ENCODE measurements at regions of chr2 and their contacts with region 1.

Region 1: DNA sequence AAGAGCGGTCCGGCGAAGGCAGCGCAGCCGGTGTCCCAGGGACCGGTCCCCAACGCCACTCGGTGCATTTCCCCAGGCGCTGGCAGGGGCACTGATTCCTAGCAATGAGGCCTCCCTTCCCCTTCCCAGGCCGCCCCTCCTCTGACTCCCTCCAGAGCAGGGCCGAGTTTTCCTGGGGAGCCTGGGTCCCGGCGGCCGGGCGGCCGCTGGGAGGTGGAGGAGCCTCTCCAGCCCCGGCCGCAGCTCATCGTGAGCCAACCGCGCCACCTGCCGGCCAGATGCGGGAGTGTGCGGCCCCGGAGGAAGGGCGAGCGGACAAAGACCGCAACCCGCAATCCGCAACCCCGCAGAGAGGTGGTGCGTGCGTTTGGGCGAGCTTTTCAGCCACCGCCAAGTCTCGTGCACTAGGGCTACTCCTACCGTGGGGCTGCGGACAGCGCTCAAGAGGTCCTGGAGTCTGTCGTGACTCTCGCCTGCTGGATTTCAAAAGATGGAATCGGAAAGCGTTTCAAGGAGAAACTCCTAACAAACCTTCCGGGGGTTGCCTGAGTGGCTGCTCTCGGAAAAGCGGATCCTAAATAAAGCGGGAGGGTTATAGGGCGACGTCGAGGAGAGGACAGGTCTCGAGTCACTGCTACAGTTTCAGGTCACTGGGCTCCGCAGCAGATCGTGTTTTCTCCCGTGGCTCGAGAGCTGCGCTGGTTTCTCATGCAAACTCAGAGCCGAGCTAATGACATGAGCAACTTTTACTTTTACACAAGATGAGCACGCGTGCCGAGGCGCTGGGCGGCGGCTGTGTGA is 1.5 kb upstream of the EPHA4 start:
- DNase-seq: peak; percentile 82 to 94
- H3K4me3 ChIP-seq: peak overlapping the region; percentile 79
- H3K4me1 ChIP-seq: peaks cover 21% of the 10 kb centered on the region
- H3K27me3 ChIP-seq: no peaks in the 10 kb centered on the region

Region 2: DNA sequence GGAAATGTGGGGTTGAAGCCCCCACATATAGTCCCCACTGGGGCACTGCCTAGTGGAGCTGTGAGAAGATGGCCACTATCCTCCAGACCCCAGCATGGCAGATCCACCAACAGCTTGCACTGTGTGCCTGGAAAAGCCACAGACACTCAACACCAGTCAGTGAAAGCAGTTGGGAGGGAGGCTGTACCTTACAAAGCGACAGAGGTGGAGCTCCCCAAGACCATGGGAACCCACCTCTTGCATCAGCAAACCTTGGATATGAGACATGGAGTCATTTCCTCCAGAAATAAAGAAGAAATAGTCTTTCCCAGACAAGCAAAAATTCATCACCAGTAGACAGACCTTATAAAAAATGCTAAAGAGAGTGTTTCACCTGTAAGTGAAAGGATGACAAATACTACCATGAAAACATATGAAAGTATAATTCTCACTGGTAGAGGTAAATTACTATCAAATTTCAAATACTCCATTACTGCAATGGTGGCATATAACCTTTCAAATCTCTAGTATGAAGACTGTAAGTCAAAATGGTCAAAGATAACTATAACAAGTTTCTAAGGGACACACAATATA is 151.1 kb after region 1 on chr2:
- in situ Hi-C with region 1: no loop called
- DNase-seq: no peak
- H3K4me3 ChIP-seq: no peak overlapping the region
- H3K4me1 ChIP-seq: no peaks in the 10 kb centered on the region
- H3K27me3 ChIP-seq: no peaks in the 10 kb centered on the region

Region 3: DNA sequence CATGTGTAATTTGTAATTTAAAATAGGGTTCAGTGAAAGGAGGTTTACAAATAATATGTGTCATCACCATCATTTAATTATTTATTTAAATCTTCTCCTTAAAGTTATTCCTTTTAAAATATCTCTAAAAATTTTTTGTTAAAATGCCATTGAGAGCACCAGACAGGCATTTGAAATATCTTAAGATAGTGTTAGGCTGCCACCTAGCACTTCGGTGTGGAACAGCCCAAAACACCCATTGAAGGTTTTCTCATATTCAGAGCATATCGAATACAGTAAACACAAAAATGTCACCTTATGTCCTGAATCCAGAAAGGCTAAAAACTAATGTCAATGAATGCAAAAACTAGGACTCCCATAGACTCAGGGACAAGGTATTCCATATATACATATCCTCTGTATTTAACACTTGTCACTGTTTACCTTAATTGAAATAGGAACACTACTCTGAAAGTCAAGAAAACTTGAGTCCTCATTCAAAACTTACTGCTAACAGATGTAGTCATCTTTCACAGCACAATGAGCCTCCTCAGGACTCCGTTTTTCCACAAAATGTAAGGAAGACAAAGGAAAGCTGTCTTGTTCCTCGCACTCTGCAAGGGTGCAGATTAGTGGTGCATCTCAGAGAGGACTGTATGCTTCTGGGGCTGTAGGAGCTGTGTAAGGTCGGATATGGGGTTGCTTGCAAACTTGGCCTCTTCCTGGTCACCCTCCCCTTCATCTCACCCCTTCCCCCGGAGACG is 395.6 kb after region 1 on chr2:
- in situ Hi-C with region 1: loop called (anchors 10 kb)
- DNase-seq: peak; percentile 58 to 66
- H3K4me3 ChIP-seq: no peak overlapping the region
- H3K4me1 ChIP-seq: peaks cover 12% of the 10 kb centered on the region
- H3K27me3 ChIP-seq: no peaks in the 10 kb centered on the region

Measured in HAP-1 (cell line).